Adrenal gland (tissue), 19 donors: ENCODE measurements at regions of chr2 and their contacts with region 1.

Region 1: GRCh38 chr2:100562732-100563720 is at the start of gene PDCL3:
- DNase-seq: peak; percentile 95 to 99 (median 99)
- H3K4me3 ChIP-seq: peak within 1 kb of the TSS; percentile 30 to 97 (median 54)
- H3K27ac ChIP-seq: peak within 1 kb of the TSS; percentile 82 to 95 (median 95)
- H3K4me1 ChIP-seq: peaks cover 0 to 8% of the 10 kb centered on the region in 2 donors
- H3K27me3 ChIP-seq: no peaks in the 10 kb centered on the region
- CTCF ChIP-seq: peak in 2 of 6 experiments; percentile 16 to 29
- POLR2A ChIP-seq: peak; percentile 61 to 93
- total RNA-seq, gene PDCL3: 9.6 to 22.9 (median 17.1) TPM

Region 2: GRCh38 chr2:100416935-100417710 is 145.9 kb before region 1 on chr2 and contains the start of gene CHST10:
- intact Hi-C with region 1: loop called in 1 of 2 experiments (anchors 10 kb)
- DNase-seq: peak; percentile 36 to 62 (median 51)
- H3K4me3 ChIP-seq: peak within 1 kb of the TSS; percentile 42 to 82 (median 70)
- H3K27ac ChIP-seq: peak within 1 kb of the TSS in 3 of 5 donors; percentile 52 to 87 (median 74)
- H3K4me1 ChIP-seq: peaks cover 7% of the 10 kb centered on the region in 2 donors
- H3K27me3 ChIP-seq: no peaks in the 10 kb centered on the region
- CTCF ChIP-seq: no peak
- POLR2A ChIP-seq: peak; percentile 28 to 47
- total RNA-seq, gene CHST10: 5.6 to 18.4 (median 11.9) TPM

Region 3: GRCh38 chr2:100640431-100641124 is 77.6 kb after region 1 on chr2:
- intact Hi-C with region 1: no loop called
- DNase-seq: peak in 1 of 7 donors; percentile 16
- H3K4me3 ChIP-seq: no peak overlapping the region
- H3K27ac ChIP-seq: no peak overlapping the region
- H3K4me1 ChIP-seq: peaks cover 0 to 10% of the 10 kb centered on the region in 2 donors
- H3K27me3 ChIP-seq: no peaks in the 10 kb centered on the region
- CTCF ChIP-seq: no peak
- POLR2A ChIP-seq: no peak